ENCODE measurements at regions of chr16 and their contacts with region 1.

Region 1: DNA sequence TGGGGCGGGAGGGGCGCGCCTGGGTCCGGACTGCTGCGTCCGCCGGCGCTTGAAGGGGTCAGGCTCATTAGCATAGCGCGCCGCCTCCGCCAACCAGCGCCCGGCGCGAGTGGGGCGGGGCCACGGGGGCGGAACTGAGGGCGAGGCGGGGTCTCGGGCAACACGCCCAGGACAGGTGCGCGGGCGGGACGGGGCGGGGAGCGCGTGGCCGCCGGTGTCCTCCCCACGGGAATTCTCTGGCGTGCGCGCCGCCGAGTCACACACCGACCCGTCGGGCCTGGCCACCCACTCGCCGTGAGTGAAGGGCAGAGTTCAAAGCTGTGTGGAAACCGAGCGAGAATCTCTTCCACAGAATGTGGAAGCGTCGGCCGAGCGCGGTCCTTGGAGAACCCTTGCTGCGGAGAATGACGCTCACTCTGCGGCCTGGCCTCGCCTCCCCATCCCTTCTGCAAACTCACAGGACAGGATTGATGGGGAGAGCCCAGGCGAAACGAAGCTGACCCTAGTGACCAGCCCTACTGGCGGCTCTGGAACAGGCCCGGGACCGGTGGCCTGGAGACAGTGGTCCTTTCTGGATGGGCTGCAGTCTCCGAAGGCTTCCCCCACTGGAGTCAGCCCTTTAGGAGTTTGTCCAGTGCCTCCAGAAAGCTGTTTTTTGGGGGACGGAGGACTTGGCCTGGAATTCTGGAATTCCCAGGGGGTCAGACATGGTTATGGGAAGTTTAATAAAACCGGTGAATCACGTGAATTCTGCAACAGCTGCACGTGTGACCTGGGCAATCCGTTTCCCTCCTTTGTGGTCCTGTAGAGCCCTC is at the start of gene SNAI3:
- DNase-seq: peak; percentile 91
- ATAC-seq: peak; percentile 79
- H3K4me3 ChIP-seq: peak within 1 kb of the TSS; percentile 59 to 91 (median 80)
- H3K4me3 Mint-ChIP-seq: peak within 1 kb of the TSS; percentile 81
- H3K27ac ChIP-seq: peak within 1 kb of the TSS; percentile 27 to 48
- H3K27ac Mint-ChIP-seq: peak within 1 kb of the TSS; percentile 72
- H3K4me1 ChIP-seq: peaks cover 29 to 55% of the 10 kb centered on the region in 2 donors
- H3K4me1 Mint-ChIP-seq: peaks cover 41% of the 10 kb centered on the region
- H3K27me3 ChIP-seq: no peaks in the 10 kb centered on the region
- H3K27me3 Mint-ChIP-seq: no peaks in the 10 kb centered on the region
- CTCF ChIP-seq: no peak
- total RNA-seq, gene SNAI3: 8.2 and 8.8 TPM in 2 replicates

Region 2: GRCh38 chr16:87702325-87702811 is 984.3 kb before region 1 on chr16:
- CTCF ChIA-PET with region 1: no interaction called
- POLR2A ChIA-PET with region 1: no interaction called
- intact Hi-C with region 1: no loop called
- DNase-seq: peak; percentile 74
- ATAC-seq: peak; percentile 51
- H3K4me3 ChIP-seq: peak overlapping the region in 1 of 5 experiments; percentile 38
- H3K4me3 Mint-ChIP-seq: peak overlapping the region; percentile 63
- H3K27ac ChIP-seq: peak overlapping the region; percentile 79 to 80
- H3K27ac Mint-ChIP-seq: peak overlapping the region; percentile 91
- H3K4me1 ChIP-seq: peaks cover 45 to 67% of the 10 kb centered on the region in 2 donors
- H3K4me1 Mint-ChIP-seq: peaks cover 56% of the 10 kb centered on the region
- H3K27me3 ChIP-seq: no peaks in the 10 kb centered on the region
- H3K27me3 Mint-ChIP-seq: no peaks in the 10 kb centered on the region
- CTCF ChIP-seq: peak; percentile 45

Region 3: GRCh38 chr16:88619859-88620815 is 66.5 kb before region 1 on chr16:
- CTCF ChIA-PET with region 1: no interaction called
- POLR2A ChIA-PET with region 1: no interaction called
- intact Hi-C with region 1: no loop called
- DNase-seq: no peak
- ATAC-seq: peak; percentile 28
- H3K4me3 ChIP-seq: no peak overlapping the region
- H3K4me3 Mint-ChIP-seq: no peak overlapping the region
- H3K27ac ChIP-seq: no peak overlapping the region
- H3K27ac Mint-ChIP-seq: no peak overlapping the region
- H3K4me1 ChIP-seq: no peaks in the 10 kb centered on the region
- H3K4me1 Mint-ChIP-seq: no peaks in the 10 kb centered on the region
- H3K27me3 ChIP-seq: no peaks in the 10 kb centered on the region
- H3K27me3 Mint-ChIP-seq: no peaks in the 10 kb centered on the region
- CTCF ChIP-seq: no peak

Region 4: DNA sequence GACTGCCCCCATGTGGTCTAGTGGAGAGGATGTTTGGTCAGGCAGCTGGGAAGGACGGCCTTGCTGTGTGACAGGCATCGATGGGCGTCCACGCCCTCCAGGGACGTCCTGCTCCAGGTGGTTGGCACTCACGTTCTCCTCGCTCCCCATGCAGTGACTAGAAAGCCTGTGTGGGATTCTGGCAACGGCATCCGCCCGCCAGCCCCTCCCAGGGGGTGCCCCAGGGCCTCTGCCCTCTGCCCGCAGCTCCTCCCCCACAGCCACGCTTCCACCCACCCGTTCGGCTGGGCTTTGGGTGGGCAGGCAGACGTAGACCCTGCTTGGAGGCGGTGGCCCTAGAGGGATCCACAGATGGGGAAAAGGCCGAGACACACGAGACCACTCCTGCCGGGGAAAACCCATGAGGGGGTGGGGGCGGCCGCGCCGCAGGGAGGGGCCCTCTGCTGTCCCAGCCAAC is 52.9 kb before region 1 on chr16:
- CTCF ChIA-PET with region 1: interaction called, 14 read pairs
- POLR2A ChIA-PET with region 1: interaction called, 12 read pairs
- intact Hi-C with region 1: loop called (anchors 1 kb)
- DNase-seq: no peak
- ATAC-seq: no peak
- H3K4me3 ChIP-seq: peak overlapping the region in 4 of 5 experiments; percentile 62 to 78 (median 68)
- H3K4me3 Mint-ChIP-seq: peak overlapping the region; percentile 85
- H3K27ac ChIP-seq: peak overlapping the region; percentile 81 to 87
- H3K27ac Mint-ChIP-seq: peak overlapping the region; percentile 92
- H3K4me1 ChIP-seq: peaks cover 37 to 56% of the 10 kb centered on the region in 2 donors
- H3K4me1 Mint-ChIP-seq: peaks cover 45% of the 10 kb centered on the region
- H3K27me3 ChIP-seq: peaks cover 0 to 6% (median 0%) of the 10 kb centered on the region in 4 experiments
- H3K27me3 Mint-ChIP-seq: no peaks in the 10 kb centered on the region
- CTCF ChIP-seq: no peak

Region 5: GRCh38 chr16:88662843-88663606 is 23.6 kb before region 1 on chr16 and contains the start of gene MVD:
- CTCF ChIA-PET with region 1: interaction called, 13 read pairs
- POLR2A ChIA-PET with region 1: interaction called, 4 read pairs
- intact Hi-C with region 1: loop called (anchors 1 kb)
- DNase-seq: peak; percentile 97
- ATAC-seq: peak; percentile 96
- H3K4me3 ChIP-seq: peak within 1 kb of the TSS; percentile 49 to 89 (median 88)
- H3K4me3 Mint-ChIP-seq: peak within 1 kb of the TSS; percentile 92
- H3K27ac ChIP-seq: peak within 1 kb of the TSS; percentile 62 to 88
- H3K27ac Mint-ChIP-seq: peak within 1 kb of the TSS; percentile 93
- H3K4me1 ChIP-seq: peaks cover 18 to 30% of the 10 kb centered on the region in 2 donors
- H3K4me1 Mint-ChIP-seq: peaks cover 31% of the 10 kb centered on the region
- H3K27me3 ChIP-seq: no peaks in the 10 kb centered on the region
- H3K27me3 Mint-ChIP-seq: no peaks in the 10 kb centered on the region
- CTCF ChIP-seq: no peak
- total RNA-seq, gene MVD: 84.5 and 95.4 TPM in 2 replicates

Region 6: DNA sequence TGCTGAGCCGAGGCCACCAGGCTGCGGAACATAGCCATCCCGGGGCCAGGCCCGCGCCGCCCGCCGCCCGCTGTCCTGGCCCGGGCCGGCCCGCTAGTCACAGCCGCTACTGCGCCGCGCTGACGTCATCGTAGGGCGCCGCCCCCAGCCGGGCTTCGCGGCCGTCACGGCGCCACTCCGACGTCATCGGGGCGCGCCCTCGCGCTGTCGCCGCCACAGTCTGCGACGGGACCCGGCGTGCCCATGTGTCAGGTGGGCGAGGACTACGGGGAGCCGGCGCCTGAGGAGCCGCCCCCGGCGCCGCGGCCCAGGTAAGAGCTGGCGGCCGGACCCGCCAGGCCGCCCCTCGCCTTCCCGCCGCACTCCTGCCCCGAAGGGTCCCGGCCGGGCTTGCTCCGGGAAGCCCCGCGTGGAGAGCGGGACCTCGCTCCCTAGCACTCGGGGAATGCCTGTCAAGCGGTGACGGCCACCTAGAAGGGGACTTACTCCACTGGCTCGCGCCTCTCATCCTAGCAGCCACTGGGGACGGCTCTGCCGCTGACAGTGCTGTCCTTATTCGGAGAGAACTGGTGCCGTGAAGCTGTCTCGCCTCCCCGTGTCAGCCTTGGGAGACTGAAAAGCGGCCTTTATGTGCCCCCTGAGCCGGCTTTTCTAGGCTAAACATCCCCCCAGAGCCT is 19.8 kb after region 1 on chr16 and contains the starts of genes CTU2 and RNF166:
- CTCF ChIA-PET with region 1: interaction called, 13 read pairs
- POLR2A ChIA-PET with region 1: interaction called, 14 read pairs
- intact Hi-C with region 1: loop called (anchors 1 kb)
- DNase-seq: peak; percentile 95
- ATAC-seq: peak; percentile 70
- H3K4me3 ChIP-seq: peak within 1 kb of the TSS; percentile 71 to 95 (median 80)
- H3K4me3 Mint-ChIP-seq: peak within 1 kb of the TSS; percentile 85
- H3K27ac ChIP-seq: peak within 1 kb of the TSS; percentile 84 to 91
- H3K27ac Mint-ChIP-seq: peak within 1 kb of the TSS; percentile 92
- H3K4me1 ChIP-seq: peaks cover 48 to 53% of the 10 kb centered on the region in 2 donors
- H3K4me1 Mint-ChIP-seq: peaks cover 47% of the 10 kb centered on the region
- H3K27me3 ChIP-seq: no peaks in the 10 kb centered on the region
- H3K27me3 Mint-ChIP-seq: no peaks in the 10 kb centered on the region
- CTCF ChIP-seq: no peak
- total RNA-seq, gene CTU2: 18.4 and 19.3 TPM in 2 replicates
- total RNA-seq, gene RNF166: 64.1 and 75.8 TPM in 2 replicates

Region 7: GRCh38 chr16:89093602-89094251 is 407.1 kb after region 1 on chr16 and contains the start of gene ACSF3:
- CTCF ChIA-PET with region 1: no interaction called
- POLR2A ChIA-PET with region 1: no interaction called
- intact Hi-C with region 1: no loop called
- DNase-seq: peak; percentile 83
- ATAC-seq: peak; percentile 61
- H3K4me3 ChIP-seq: peak within 1 kb of the TSS; percentile 55 to 84 (median 68)
- H3K4me3 Mint-ChIP-seq: peak within 1 kb of the TSS; percentile 92
- H3K27ac ChIP-seq: peak within 1 kb of the TSS; percentile 29 to 74
- H3K27ac Mint-ChIP-seq: peak within 1 kb of the TSS; percentile 92
- H3K4me1 ChIP-seq: peaks cover 43 to 53% of the 10 kb centered on the region in 2 donors
- H3K4me1 Mint-ChIP-seq: peaks cover 49% of the 10 kb centered on the region
- H3K27me3 ChIP-seq: peaks cover 0 to 11% (median 4%) of the 10 kb centered on the region in 4 experiments
- H3K27me3 Mint-ChIP-seq: peaks cover 23% of the 10 kb centered on the region
- CTCF ChIP-seq: no peak
- total RNA-seq, gene ACSF3: 113 and 115 TPM in 2 replicates

Region 8: DNA sequence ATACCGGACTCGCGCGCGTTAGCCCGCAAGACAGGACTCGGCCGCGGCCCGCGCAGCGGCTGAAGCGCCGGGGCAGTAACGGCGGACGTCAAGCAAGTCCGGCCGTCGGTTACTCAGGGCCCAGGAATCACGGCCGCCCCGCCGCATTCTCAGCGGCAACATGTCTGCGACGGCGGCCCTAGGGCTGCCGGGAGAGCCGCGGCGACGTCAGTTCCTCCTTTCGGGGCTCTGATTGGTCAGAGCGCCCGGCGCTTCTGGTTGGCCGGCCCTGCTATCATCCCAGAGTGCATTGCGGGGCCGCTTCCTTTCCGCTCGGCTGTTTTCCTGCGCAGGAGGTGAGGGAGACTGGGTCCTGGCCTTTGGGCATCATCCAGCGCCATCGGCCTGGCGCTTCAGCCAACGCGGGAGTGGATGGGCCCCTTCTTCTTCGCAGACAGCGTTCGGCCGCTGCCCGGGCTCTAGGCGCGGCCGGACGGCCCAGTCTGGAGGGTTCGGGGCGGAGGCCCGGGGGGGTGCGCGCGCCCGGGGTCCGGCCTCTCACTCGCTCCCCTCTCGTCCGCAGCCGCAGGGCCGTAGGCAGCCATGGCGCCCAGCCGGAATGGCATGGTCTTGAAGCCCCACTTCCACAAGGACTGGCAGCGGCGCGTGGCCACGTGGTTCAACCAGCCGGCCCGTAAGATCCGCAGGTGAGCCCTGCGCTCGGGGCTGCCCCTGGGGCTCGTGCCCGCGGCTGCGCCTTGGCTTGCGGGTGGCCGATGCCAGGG is 873.9 kb after region 1 on chr16 and contains the start of gene RPL13:
- CTCF ChIA-PET with region 1: no interaction called
- POLR2A ChIA-PET with region 1: no interaction called
- intact Hi-C with region 1: loop called (anchors 10 kb)
- DNase-seq: peak; percentile 95
- ATAC-seq: peak; percentile 94
- H3K4me3 ChIP-seq: peak within 1 kb of the TSS; percentile 54 to 99 (median 92)
- H3K4me3 Mint-ChIP-seq: peak within 1 kb of the TSS; percentile 92
- H3K27ac ChIP-seq: peak within 1 kb of the TSS; percentile 82 to 91
- H3K27ac Mint-ChIP-seq: peak within 1 kb of the TSS; percentile 95
- H3K4me1 ChIP-seq: peaks cover 36 to 41% of the 10 kb centered on the region in 2 donors
- H3K4me1 Mint-ChIP-seq: peaks cover 43% of the 10 kb centered on the region
- H3K27me3 ChIP-seq: no peaks in the 10 kb centered on the region
- H3K27me3 Mint-ChIP-seq: no peaks in the 10 kb centered on the region
- CTCF ChIP-seq: no peak
- total RNA-seq, gene RPL13: 3,172 and 3,184 TPM in 2 replicates

Measured in B cell (primary cell).